ENCODE measurements at regions of chr10 and their contacts with region 1.

Region 1: GRCh38 chr10:97927622-97928021 is 78.0 kb downstream of the GOLGA7B start:
- DNase-seq: no peak
- ATAC-seq: no peak
- H3K4me3 ChIP-seq: no peak overlapping the region
- H3K27ac ChIP-seq: no peak overlapping the region
- H3K4me1 ChIP-seq: no peaks in the 10 kb centered on the region
- H3K27me3 ChIP-seq: peaks cover 0 to 37% (median 15%) of the 10 kb centered on the region in 7 donors
- CTCF ChIP-seq: no peak

Region 2: DNA sequence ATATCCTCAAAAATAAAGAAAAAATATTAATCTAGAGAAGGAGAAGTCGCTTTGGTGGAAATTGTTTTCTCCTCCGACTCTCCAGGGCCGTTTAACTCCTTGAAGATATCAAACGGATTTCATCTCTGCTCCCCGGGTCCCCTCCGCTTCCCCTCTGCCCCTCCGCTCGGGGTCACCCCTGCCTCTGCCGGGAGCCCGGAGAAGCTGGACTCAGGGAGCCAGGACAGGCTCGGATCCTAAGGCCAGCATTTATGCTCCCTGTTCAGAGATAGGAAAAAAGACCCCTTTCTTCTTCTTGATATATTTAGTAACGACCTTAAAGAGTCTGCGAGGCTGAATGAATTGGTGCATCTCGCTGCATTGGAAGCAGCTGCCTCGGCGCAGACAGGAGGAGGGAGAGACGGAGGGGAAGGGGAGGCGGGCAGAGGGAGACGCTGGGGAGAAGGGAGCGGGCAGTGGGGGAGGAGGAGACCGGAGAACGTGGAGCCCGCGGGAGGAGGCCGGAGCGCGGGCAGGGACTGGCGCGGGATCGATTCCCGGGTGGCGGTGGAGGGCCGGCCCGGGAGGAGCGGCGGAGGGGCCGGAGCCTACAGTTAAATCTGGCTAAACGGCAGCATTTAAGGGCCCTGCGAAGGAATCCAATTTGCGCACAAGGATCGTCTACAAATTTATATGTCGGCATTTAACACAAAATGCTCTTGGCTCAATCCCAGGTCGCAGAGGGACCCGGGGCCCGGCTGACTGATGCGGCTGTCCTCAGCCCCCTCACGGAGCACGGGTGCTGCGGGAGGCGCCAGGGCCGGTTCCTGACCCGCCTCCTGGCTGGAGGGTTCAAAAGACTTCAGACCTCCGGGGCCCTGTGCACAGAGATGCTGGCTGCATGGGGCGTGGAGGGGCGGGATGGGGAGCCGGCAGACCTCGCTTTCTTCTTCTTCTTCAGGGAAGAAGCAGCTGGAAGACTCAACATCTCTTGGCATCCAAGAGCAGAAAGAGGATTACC is 47.2 kb after region 1 on chr10:
- intact Hi-C with region 1: loop called in 1 of 10 experiments (anchors 5 kb)
- DNase-seq: no peak
- ATAC-seq: no peak
- H3K4me3 ChIP-seq: no peak overlapping the region
- H3K27ac ChIP-seq: no peak overlapping the region
- H3K4me1 ChIP-seq: peaks cover 0 to 3% (median 0%) of the 10 kb centered on the region in 9 donors
- H3K27me3 ChIP-seq: peaks cover 5 to 95% (median 82%) of the 10 kb centered on the region in 7 donors
- CTCF ChIP-seq: no peak

Measured in heart right ventricle (tissue), 16 donors.